Activated CD8-positive, alpha-beta T cell treated with anti-CD3 and anti-CD28 coated beads, Interleukin-2, amount 10 ng/mL, durations not matched to agents 7 days and 5 days (primary cell): ENCODE measurements at regions of chr4 and their contacts with region 1.

Region 1: DNA sequence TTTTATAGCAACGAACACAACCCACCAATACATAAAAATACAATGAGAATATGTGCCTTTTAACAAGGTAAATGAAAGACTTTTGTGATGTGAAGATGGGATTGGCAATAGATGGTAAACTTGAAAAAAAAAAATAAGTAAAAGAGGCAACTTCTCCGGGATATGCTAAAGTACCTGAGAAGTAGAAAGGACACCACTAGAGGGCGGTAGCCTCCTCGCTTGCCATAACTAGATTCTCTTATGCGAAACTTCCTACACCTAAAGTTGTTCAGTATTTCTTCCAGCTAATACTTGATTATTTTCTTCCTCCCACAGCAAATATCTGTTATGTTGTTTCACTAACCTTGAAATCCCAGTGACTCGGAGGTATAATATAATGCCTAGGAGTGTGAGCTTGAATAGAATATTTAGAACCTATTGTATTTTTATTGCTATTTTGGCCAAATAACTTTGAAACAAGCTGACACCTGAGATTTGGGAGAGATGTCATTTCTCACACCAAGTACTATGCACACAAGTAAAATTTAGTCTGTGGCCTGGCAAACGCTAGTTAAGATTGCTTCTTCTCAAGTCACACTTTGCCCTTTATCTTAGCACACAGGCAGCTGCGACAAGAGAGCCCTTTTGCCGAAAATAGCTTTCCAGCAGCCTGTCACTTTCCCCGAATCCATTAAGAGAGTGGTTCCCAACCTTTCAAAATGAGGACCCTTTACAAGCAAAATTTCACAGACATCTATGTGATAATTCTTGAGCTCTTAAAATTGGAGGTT is 44.9 kb upstream of the PDLIM5 start:
- DNase-seq: peak; percentile 72
- ATAC-seq: peak; percentile 57
- H3K4me3 Mint-ChIP-seq: no peak overlapping the region
- H3K27ac Mint-ChIP-seq: no peak overlapping the region
- H3K4me1 Mint-ChIP-seq: no peaks in the 10 kb centered on the region
- H3K27me3 Mint-ChIP-seq: peaks cover 3% of the 10 kb centered on the region

Region 2: GRCh38 chr4:94208266-94208665 is 198.6 kb before region 1 on chr4:
- CTCF ChIA-PET with region 1: no interaction called
- POLR2A ChIA-PET with region 1: no interaction called
- DNase-seq: no peak
- ATAC-seq: no peak
- H3K4me3 Mint-ChIP-seq: peak overlapping the region; percentile 95
- H3K27ac Mint-ChIP-seq: peak overlapping the region; percentile 99
- H3K4me1 Mint-ChIP-seq: peaks cover 24% of the 10 kb centered on the region
- H3K27me3 Mint-ChIP-seq: no peaks in the 10 kb centered on the region

Region 3: GRCh38 chr4:94419956-94420355 is 13.1 kb after region 1 on chr4:
- CTCF ChIA-PET with region 1: interaction called, 14 read pairs
- POLR2A ChIA-PET with region 1: no interaction called
- DNase-seq: no peak
- ATAC-seq: no peak
- H3K4me3 Mint-ChIP-seq: no peak overlapping the region
- H3K27ac Mint-ChIP-seq: no peak overlapping the region
- H3K4me1 Mint-ChIP-seq: no peaks in the 10 kb centered on the region
- H3K27me3 Mint-ChIP-seq: peaks cover 16% of the 10 kb centered on the region

Region 4: DNA sequence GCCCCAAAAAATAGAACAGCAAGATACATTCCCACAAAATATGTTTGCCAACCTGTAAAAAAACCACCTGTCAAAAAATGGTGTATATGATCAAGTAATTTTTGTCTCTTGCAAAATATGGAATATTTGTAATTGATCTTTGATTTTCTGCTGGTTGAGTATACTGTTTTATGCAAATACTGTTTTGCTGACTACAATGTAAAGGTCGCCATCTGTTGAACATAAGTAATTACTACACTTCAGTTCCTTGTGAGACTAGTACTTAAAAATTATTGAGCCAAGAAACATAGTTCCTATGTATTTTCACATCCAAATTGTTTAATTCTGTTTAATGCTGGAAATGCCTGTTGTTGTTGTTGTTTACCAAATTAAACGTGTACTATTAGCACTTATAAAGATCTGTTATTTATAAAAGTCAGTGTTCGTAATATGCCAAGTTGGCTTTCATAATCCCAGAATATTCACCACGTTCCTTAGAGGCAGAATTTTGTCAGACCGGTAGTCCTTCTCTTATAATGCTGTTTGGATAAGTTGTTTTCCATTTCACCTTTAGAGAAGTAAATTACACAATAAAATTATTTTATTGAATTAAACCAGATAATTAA is 189.1 kb after region 1 on chr4:
- CTCF ChIA-PET with region 1: interaction called, 10 read pairs
- POLR2A ChIA-PET with region 1: no interaction called
- DNase-seq: no peak
- ATAC-seq: no peak
- H3K4me3 Mint-ChIP-seq: no peak overlapping the region
- H3K27ac Mint-ChIP-seq: no peak overlapping the region
- H3K4me1 Mint-ChIP-seq: no peaks in the 10 kb centered on the region
- H3K27me3 Mint-ChIP-seq: no peaks in the 10 kb centered on the region